AG04449 (cell line): ENCODE measurements at regions of chr10 and their contacts with region 1.

Region 1: DNA sequence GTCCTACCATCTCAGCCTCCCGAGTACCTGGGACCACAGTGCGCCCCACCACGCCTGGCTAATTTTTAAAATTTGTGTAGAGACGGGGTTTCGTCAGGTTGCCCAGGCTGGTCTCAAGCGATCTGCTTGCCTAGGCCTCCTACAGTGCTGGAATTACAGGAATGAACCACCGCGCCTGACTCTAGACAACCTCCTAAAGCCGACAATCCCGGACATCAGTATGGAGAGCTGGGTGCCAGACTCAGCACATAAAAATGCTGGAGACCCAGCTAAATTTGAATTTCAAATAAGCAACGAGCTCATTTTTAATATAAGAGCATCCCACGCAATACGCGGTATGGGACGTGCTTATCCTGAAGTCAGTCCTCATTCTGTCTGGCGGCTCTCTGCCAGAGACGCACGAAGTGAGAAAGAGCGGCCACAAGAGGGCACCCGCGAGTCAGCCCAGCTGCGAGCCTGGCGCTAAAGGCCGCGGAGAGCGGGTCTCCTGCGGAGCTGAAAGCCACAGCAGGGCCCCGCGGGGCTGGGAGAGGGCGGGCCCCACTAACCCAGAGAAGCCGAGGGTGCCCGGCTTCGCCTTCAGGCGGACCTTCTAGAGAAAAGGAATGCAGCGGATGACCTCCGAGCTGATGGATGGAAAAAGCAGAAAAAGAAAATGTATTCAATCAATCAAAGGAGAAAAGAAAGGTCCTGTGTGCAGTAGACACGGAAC is 7.0 kb downstream of the CALY start:
- DNase-seq: peak; percentile 52
- H3K4me3 ChIP-seq: peak overlapping the region; percentile 33
- CTCF ChIP-seq: peak; percentile 97

Region 2: DNA sequence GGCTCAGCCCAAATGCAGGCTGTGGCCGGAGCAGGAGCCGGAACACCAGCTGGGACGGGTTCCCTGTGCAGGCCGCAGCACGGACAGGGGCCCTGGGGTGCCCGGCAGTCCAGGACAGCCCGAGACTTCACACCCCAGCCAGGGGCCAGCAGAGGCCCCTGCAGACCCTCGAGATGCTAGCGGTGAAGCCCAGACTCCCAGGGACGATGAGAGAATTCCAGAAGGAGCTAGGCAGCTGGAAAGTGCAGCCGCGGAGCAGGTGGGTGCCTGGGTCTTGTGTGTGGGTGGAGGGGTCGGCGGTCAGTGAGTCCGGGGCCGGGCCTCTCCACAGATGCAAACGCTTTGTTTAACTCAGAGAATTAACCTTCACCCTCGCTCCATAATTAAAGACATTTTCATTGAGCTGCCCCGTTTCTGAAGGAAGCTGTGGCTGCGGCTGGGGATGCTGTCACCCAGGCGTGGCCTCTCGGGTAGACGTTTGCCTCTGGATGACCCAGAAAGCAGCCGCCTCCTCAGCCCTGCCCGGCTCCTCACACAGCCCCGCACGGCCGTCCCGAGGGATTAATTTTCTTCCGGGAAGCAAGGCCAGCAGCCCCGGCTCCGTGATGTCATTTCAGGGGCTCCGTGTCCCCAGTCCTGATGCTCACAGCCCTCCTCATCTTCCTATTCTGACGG is 143.1 kb before region 1 on chr10:
- CTCF ChIA-PET with region 1: no interaction called
- POLR2A ChIA-PET with region 1: no interaction called
- DNase-seq: no peak
- H3K4me3 ChIP-seq: no peak overlapping the region
- CTCF ChIP-seq: no peak

Region 3: DNA sequence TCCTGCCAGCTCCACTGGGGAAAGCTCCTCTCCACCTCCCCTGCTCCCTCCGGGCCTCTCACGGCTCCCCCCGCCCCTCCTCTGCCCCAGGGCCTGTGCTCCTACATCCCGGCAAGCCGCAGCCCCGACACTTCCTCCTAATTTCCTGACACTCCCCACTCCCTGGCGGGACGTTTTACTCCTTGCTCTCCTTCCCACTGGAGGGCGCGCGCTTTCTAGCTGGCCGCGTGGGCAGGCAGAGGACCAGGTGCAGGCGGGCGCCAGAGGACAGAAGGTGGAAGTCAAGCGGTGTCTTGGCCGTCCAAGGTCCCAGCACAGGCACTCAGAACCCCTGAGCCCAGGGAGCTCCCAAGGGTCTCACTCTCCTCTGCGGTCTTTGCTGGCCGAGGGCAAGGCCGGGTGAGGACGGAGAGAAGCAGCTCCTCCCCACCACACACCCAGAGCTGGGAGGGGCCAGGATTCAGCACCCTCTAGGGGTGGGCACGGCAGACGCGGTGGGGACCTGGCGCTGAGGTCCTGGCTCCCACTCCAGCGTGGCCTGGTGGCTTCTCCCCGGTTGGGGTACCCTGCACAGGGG is 72.1 kb before region 1 on chr10:
- CTCF ChIA-PET with region 1: interaction called, 10 read pairs
- POLR2A ChIA-PET with region 1: no interaction called
- DNase-seq: no peak
- H3K4me3 ChIP-seq: no peak overlapping the region
- CTCF ChIP-seq: peak; percentile 32

Region 4: DNA sequence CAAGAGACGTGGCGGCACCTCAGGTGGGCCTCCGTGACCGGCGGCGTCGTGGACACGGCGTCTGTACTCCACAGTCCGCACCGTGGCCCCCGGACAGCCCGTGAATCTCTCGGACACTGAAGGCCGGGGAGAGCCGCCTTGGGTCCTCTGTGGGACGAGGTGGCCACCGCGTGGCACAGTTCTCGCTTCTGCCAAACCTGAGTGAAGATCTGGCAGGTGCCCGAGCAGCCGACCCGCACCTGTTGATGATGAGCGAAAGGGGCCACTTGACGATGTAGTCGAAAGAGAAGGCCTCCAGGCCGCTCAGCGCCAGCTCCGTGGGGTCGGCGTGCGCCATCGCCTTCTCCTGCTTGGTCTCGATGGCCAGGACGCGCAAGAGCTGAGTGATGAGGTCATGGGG is 44.4 kb before region 1 on chr10:
- CTCF ChIA-PET with region 1: no interaction called
- POLR2A ChIA-PET with region 1: no interaction called
- DNase-seq: no peak
- H3K4me3 ChIP-seq: no peak overlapping the region
- CTCF ChIP-seq: no peak

Region 5: DNA sequence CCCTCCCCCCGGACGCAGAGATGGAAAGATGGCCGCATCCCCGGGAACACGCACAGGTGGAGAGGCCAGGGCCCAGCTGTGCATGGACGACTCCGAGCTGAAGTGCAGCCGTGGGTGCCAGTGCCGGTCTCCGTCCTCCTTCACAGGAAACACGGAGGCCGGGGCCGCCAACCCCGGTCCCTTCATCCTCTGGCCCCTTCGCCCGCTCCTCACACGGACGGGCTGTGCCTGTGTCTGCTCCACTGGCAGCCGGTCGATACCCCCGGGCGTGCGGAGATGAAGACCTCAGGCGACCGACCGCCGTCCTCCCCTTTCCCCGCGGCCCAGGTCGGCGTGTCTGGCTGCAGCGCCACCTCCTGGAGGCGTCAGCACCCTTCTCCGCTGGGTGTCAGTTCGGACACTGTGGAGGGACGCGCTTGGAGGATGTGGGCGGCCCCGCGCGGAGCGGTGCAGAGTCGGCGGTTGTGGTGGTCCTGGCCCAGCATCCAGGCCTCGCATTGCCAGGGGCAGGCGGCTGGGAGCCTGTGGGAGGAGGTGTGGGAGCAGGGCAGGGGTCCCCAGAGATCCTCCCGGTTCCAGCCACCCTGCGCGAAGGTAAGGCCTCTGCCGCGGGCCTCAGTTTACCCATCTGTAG is 11.0 kb before region 1 on chr10:
- CTCF ChIA-PET with region 1: interaction called, 35 read pairs
- POLR2A ChIA-PET with region 1: no interaction called
- DNase-seq: no peak
- H3K4me3 ChIP-seq: peak overlapping the region; percentile 55
- CTCF ChIP-seq: peak; percentile 96

Region 6: GRCh38 chr10:133351408-133352318 is 22.0 kb after region 1 on chr10:
- CTCF ChIA-PET with region 1: interaction called, 25 read pairs
- POLR2A ChIA-PET with region 1: interaction called, 6 read pairs
- DNase-seq: no peak
- H3K4me3 ChIP-seq: no peak overlapping the region
- CTCF ChIP-seq: no peak

Region 7: DNA sequence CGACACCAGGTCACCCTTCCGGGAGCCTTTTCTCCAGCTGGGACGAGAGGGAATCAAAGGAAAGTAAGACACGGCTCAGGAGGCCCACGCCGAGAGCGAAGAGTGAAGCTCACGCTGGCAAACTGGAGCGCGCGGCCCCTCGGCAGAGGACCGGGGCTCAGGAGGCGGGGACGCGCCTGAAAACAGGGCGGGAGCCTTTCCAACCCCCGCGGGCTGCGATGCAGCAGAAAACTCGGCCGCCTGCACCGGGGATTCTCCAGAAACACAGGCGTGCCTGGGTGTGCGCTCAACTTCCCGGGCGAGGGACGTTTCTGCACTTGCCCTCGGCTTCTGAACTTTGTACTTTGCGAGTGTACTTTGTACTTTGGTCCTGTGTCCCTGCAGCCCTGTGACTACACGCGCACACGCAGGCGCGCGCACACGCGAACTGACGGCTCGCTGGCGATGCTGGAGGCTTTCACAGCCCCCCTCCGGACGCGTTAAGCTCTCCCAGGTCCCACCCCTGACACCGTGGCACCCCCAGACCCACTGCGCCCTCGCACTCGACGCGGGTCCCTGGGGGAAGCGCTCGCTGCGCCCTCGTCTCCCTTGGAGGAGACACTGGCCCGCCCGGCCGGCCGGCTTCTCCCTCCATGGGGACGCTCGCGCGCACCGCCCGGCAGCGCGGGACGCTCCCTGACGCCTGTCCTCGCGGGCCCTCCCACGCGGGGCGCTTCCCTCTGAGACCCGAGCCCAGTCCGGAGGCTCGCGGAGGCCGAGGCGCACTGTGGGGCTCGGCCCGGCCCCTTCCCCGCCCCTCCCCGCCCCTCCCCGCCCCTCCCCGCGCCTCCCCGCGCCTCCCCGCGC is 48.8 kb after region 1 on chr10:
- CTCF ChIA-PET with region 1: interaction called, 10 read pairs
- POLR2A ChIA-PET with region 1: no interaction called
- DNase-seq: no peak
- H3K4me3 ChIP-seq: peak overlapping the region; percentile 75
- CTCF ChIP-seq: no peak

Region 8: GRCh38 chr10:133520155-133520738 is 190.6 kb after region 1 on chr10:
- CTCF ChIA-PET with region 1: interaction called, 19 read pairs
- POLR2A ChIA-PET with region 1: no interaction called
- DNase-seq: no peak
- H3K4me3 ChIP-seq: peak overlapping the region; percentile 61
- CTCF ChIP-seq: peak; percentile 93

Region 9: GRCh38 chr10:133616371-133617130 is 286.9 kb after region 1 on chr10:
- CTCF ChIA-PET with region 1: interaction called, 11 read pairs
- POLR2A ChIA-PET with region 1: no interaction called
- DNase-seq: no peak
- H3K4me3 ChIP-seq: no peak overlapping the region
- CTCF ChIP-seq: no peak